Activated CD8-positive, alpha-beta T cell treated with anti-CD3 and anti-CD28 coated beads, Interleukin-2, amount 10 ng/mL, durations not matched to agents 7 days and 5 days (primary cell): ENCODE measurements at regions of chr1 and their contacts with region 1.

Region 1: DNA sequence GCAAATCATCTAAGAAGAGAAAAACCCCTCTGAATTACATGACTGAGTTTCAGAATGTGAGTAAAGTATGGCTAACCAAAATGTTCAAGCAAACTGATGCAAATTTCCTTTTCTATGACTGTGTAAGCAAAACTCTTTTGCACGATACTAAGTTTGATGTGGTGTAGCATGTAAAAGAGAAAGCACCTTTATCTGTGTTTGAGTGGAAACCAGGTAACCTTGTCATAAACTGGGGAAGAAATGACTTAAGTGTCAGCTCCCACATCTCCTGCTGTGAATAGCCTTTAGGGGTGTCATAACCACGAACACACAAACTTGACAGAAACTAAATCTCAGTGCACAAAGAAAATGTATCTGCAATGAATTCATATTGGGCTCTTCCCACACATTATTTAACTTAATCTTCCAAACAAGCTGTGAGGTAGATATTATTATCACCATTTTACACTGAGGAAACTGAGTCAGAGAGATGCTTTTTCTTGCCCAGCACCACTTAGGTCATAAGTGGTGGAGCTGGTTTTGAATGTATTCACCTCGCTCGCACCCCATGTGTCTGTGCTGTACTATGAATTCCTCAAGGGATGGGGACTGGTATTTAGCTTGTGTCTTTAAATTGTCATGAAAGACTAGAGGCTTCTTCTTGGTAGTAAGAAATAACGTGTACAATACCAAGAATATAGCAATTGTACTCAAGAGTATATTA is 32.9 kb upstream of the IL12RB2 start:
- DNase-seq: peak; percentile 44
- ATAC-seq: peak; percentile 98
- H3K4me3 Mint-ChIP-seq: peak overlapping the region; percentile 10
- H3K27ac Mint-ChIP-seq: peak overlapping the region; percentile 71
- H3K4me1 Mint-ChIP-seq: peaks cover 20% of the 10 kb centered on the region
- H3K27me3 Mint-ChIP-seq: no peaks in the 10 kb centered on the region

Region 2: GRCh38 chr1:67261680-67262079 is 13.1 kb before region 1 on chr1:
- CTCF ChIA-PET with region 1: interaction called, 23 read pairs
- POLR2A ChIA-PET with region 1: interaction called, 6 read pairs
- DNase-seq: peak; percentile 63
- ATAC-seq: peak; percentile 89
- H3K4me3 Mint-ChIP-seq: no peak overlapping the region
- H3K27ac Mint-ChIP-seq: no peak overlapping the region
- H3K4me1 Mint-ChIP-seq: peaks cover 28% of the 10 kb centered on the region
- H3K27me3 Mint-ChIP-seq: no peaks in the 10 kb centered on the region

Region 3: DNA sequence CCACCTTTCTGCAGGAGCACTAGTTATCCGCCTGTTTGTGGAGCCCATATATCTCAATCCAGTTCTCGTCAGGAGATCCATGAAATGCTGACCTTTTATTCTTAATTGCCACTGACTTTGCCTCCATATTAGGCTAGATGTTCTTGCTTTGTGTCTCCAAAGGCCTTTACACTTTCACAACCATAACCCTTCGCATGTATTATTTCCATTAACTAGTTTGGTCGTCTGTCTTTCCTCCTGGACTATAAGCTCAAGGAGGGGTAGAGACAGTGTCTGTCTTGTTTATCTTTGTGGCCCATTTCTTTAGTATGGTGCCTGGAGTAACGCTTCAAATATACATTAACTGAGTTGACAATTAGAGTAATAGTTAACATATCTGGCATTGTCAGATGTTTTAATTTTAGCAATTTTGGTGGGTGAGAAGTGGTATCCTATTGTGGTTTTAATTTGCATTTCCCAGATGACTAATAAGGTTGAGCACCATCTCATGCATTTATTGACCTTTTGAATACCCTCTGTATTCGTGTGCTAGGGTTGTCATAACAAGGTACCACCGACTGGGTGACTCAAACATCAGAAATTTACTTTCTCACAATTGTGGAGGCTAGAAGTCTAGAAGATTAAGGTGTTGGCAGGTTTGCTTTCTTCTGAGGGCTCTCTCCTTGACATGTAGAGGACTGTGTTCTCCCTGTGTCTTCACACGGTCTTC is 11.2 kb after region 1 on chr1:
- CTCF ChIA-PET with region 1: interaction called, 19 read pairs
- POLR2A ChIA-PET with region 1: no interaction called
- DNase-seq: no peak
- ATAC-seq: peak; percentile 81
- H3K4me3 Mint-ChIP-seq: no peak overlapping the region
- H3K27ac Mint-ChIP-seq: no peak overlapping the region
- H3K4me1 Mint-ChIP-seq: peaks cover 22% of the 10 kb centered on the region
- H3K27me3 Mint-ChIP-seq: no peaks in the 10 kb centered on the region